Posterior vena cava (tissue), 2 donors: ENCODE measurements at regions of chr17 and their contacts with region 1.

Region 1: DNA sequence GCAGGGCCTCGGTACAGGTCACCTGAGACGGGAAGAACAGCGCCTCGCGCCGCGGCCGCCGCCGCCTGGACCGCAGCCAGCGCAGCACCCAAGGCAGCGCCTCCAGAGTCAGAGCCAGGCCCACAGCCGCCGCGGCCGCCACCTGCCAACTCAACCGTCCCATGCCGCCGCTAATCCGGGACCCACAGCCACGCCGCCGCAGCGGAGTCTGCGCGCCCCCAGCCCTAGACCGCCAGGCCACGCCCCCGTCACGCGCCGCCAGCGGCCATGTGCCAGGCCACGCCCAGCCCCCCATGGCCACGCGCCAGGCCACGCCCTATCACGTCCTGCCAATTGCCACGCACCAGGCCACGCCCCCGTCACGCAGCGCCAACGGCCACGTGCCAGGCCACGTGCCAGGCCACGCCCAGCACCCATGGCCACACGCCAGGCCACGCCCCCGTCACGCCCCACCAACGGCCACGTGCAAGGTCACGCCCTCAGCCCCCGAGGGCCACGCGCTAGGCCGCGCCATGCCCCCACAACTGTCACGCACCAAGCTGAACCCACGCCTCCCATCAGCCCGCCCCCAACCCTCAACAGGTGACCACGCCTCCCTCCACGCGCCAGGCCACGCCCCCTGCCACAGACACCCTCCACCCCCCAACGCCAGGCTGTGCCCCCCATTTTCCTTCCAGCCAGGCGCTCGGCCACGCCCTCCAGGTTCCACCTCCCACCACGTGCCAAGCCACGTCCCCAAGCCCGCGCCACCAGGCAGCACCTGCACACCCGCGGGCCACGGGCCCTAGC is at the start of gene PLD6:
- DNase-seq: peak; percentile 95
- total RNA-seq, gene PLD6: 2.9 to 4.4 TPM

Region 2: DNA sequence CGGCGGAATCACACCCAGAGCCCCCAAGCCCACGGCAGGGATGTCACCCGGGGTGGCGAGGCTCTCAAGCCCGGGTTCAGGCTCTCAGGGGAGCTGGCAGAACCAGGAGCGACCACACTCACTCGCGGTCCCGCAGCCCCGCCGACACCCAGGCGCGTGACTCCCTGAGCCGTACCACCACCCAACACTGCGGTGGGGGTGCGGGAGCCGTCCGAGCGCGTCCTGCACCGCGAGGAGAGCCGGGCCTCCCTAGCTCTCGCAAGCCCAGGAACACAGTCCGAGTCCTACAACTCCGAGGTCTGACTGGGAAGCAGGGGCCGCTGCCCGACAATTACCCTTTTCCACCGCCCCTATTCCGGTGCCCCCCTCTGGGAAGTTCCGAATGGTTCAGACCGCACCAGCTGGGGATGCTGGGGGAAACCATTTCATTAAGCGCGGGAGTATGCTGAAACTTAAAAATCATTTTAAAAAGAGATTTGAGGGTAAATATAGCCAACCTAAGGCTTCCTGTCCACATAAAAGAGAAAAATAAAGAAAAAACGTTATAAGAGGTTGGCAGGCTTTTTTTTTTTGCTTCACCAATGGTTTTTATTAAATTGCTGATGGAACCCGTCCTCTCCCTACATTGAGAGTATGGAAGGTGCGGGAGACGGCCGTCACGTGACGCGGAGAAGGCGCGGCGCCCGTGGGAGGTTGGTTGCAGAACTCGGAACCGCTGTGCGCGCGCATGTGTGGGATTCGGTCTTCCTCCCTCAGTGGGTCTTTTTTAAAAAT is 30.9 kb after region 1 on chr17 and contains the start of gene FLCN:
- intact Hi-C with region 1: loop called in 1 of 2 experiments (anchors 5 kb)
- DNase-seq: peak; percentile 98
- total RNA-seq, gene FLCN: 37.9 to 53.5 TPM

Region 3: DNA sequence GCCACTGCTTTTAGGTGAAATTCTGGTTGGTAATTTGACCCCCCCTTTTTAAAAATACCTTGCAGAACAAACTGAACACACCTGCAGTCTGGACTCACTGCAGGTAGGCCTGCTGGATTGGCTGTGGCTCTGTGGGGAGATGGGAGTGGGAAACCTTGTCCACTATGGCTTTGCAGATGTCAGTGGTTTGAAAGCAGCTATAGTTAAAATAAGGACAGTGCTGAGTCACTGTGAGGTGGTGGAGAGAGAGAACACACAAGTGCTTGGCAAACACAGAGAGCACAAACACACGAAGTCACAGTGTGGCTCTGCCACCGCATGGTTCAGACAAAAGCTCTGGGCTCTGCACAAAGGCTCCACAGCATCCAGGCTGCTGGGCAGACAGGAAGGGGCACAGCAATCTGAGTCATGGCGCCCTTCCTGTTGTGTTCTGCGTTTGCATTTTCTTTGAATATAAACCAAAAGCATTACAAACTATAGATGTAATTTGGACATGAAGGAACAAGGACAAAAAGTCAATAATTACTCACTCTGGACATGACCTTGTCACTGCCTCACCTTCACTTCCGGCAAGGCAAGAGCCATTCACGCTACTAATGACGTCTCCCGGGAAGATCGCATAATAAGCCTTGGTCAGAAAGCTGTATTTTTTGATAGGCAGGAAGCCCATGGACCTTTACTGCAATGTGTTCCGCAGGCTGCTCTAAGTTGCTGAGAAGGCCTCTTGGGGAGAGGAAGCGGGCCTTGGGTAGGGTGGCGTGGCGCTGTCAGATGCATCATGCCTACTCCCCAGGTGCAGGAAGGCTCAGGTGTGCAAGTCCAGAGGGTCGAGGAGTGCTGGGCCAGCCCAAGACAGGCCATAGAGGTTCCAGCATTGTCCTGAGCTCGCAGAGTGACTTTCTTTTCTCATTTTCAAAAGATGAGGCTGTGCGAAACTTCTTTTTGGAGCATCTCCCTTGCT is 210.4 kb after region 1 on chr17:
- intact Hi-C with region 1: no loop called
- DNase-seq: peak; percentile 34